ENCODE measurements at regions of chr1 and their contacts with region 1.

Region 1: GRCh38 chr1:2586154-2587070 is at the start of gene PRXL2B:
- DNase-seq: peak; percentile 98
- ATAC-seq: peak; percentile 90
- H3K4me3 ChIP-seq: peak within 1 kb of the TSS; percentile 95
- H3K27ac ChIP-seq: peak within 1 kb of the TSS; percentile 88
- H3K4me1 ChIP-seq: peaks cover 14% of the 10 kb centered on the region
- H3K27me3 ChIP-seq: no peaks in the 10 kb centered on the region
- CTCF ChIP-seq: no peak
- POLR2A ChIP-seq: no peak
- RAD21 ChIP-seq: no peak
- total RNA-seq, gene PRXL2B: 8.1 and 10.9 TPM in 2 replicates

Region 2: DNA sequence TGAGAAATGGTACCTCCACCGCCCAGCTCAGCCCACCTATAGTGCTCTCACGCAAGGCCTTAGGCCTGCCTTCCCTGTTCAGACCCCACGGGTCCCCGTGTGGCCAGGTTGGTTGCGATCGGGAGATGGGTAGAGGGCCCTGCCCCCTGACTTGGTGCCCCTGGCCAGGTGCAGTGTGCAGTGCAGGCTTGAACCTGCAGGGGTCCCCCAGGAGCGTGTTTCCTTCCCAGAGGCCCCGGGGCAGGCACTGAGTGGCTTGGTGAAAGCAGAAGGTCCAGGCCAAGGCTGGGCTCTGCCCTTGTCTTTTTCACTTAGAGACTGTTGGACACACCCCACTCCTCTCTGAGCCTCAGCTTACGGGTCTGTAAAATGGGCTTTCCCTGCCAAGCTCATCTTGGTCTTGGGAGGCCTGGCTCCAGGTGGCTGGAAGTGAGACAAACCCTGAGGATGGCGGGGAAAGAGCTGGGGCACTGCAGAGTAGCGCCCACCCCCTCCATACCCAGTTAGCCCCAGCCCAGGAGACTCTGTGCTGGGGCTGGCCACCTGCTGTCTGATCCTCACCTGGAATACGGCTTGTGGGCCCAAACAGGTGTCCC is 47.0 kb before region 1 on chr1:
- CTCF ChIA-PET with region 1: no interaction called
- POLR2A ChIA-PET with region 1: no interaction called
- dilution Hi-C with region 1: no loop called
- in situ Hi-C with region 1: no loop called
- intact Hi-C with region 1: no loop called
- DNase-seq: no peak
- ATAC-seq: no peak
- H3K4me3 ChIP-seq: no peak overlapping the region
- H3K27ac ChIP-seq: no peak overlapping the region
- H3K4me1 ChIP-seq: peaks cover 11% of the 10 kb centered on the region
- H3K27me3 ChIP-seq: peaks cover 3% of the 10 kb centered on the region; the same call in 1 of the 2 replicates
- CTCF ChIP-seq: 0 out of 2 replicates have a peak, but pooled peaks have one; percentile 8
- POLR2A ChIP-seq: no peak
- RAD21 ChIP-seq: no peak

Region 3: DNA sequence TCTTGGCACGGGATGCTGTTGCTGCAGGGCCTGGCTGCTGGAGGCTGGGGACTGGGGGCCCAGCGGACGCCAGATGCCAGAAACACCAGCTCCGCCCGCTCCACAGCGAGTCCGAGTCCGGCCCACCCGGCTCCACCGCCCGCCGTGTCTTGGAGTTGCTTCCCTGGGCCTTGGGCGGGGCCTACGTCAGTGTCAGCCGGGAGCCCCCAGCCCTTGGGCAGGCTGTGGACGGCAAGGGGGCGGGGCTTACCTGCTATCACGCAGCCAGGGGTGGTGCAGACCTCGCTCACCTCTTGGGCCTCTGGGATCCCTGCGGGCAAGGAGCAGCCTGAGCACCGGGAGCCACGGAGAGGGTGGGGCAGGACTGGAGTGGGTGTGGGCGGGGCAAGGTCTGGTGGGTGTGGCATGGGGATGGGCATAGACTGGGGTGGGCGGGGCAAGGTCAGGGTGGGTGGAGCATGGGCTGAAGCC is 24.7 kb after region 1 on chr1:
- CTCF ChIA-PET with region 1: no interaction called
- POLR2A ChIA-PET with region 1: no interaction called
- dilution Hi-C with region 1: no loop called
- in situ Hi-C with region 1: no loop called
- intact Hi-C with region 1: loop called (anchors 1 kb)
- DNase-seq: no peak
- ATAC-seq: peak; percentile 59
- H3K4me3 ChIP-seq: no peak overlapping the region
- H3K27ac ChIP-seq: no peak overlapping the region
- H3K4me1 ChIP-seq: no peaks in the 10 kb centered on the region
- H3K27me3 ChIP-seq: no peaks in the 10 kb centered on the region; the same call in 1 of the 2 replicates
- CTCF ChIP-seq: no peak
- POLR2A ChIP-seq: no peak
- RAD21 ChIP-seq: no peak

Region 4: GRCh38 chr1:2642560-2643413 is 56.4 kb after region 1 on chr1:
- CTCF ChIA-PET with region 1: no interaction called
- POLR2A ChIA-PET with region 1: no interaction called
- dilution Hi-C with region 1: no loop called
- in situ Hi-C with region 1: no loop called
- intact Hi-C with region 1: loop called (anchors 2 kb)
- DNase-seq: peak; percentile 84
- ATAC-seq: peak; percentile 90
- H3K4me3 ChIP-seq: peak overlapping the region; percentile 58
- H3K27ac ChIP-seq: peak overlapping the region; percentile 13
- H3K4me1 ChIP-seq: no peaks in the 10 kb centered on the region
- H3K27me3 ChIP-seq: no peaks in the 10 kb centered on the region
- CTCF ChIP-seq: 0 out of 2 replicates have a peak, but pooled peaks have one; percentile 20
- POLR2A ChIP-seq: no peak
- RAD21 ChIP-seq: no peak

Region 5: GRCh38 chr1:3312898-3313575 is 726.6 kb after region 1 on chr1:
- CTCF ChIA-PET with region 1: no interaction called
- POLR2A ChIA-PET with region 1: no interaction called
- dilution Hi-C with region 1: no loop called
- in situ Hi-C with region 1: no loop called
- intact Hi-C with region 1: loop called (anchors 2 kb)
- DNase-seq: peak; percentile 99
- ATAC-seq: peak; percentile 93
- H3K4me3 ChIP-seq: no peak overlapping the region
- H3K27ac ChIP-seq: peak overlapping the region; percentile 84
- H3K4me1 ChIP-seq: peaks cover 17% of the 10 kb centered on the region
- H3K27me3 ChIP-seq: no peaks in the 10 kb centered on the region
- CTCF ChIP-seq: no peak
- POLR2A ChIP-seq: peak; percentile 41
- RAD21 ChIP-seq: no peak; the same call in 1 of the 2 replicates